A673 (cell line): ENCODE measurements at regions of chr2 and their contacts with region 1.

Region 1: DNA sequence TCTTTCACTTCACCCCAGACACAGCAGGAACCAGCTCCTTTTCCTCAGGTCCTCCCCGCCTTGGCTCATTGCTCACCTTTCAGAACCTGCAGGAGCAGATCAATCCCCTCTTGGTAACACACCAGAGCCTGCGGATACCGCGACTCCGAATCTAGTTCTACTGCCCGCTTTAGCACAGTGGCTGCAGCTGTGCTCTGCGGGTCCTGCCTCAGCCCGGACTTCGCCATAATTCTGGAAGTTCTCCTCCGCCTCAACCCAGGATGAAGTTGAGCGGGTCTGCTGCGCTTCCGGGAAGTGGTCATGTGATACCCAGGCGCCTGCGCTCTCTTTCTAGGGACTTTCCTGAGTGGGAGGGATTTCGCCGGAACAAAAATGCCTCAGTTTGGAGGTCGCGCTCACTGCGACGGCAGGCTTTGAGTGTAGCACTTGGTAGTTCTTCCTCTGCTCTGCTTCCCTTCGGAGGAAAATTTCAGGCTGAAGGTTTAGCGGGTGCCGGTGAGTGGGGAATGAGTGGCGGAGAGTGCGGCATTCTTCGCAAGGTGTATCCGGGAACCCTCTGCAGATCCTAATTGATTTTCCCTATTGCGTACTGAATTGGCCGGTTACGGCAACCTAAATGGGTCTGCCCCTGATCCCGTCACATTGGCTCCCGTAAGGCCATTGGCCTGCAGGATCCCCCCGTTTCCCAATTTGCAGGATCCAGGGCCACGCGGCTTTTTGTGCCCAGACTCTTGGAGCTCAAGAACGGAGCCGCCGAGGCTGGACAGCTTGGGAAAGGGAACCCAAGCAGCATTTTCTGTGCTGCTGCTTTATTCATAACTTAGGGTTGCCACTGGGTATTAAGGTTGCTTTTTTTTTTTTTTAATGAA is at the starts of genes MITD1 and MRPL30:
- DNase-seq: peak; percentile 97
- H3K4me3 ChIP-seq: peak within 1 kb of the TSS; percentile 81
- H3K27ac ChIP-seq: peak within 1 kb of the TSS; percentile 68
- H3K4me1 ChIP-seq: peaks cover 13% of the 10 kb centered on the region
- H3K27me3 ChIP-seq: no peaks in the 10 kb centered on the region
- CTCF ChIP-seq: no peak
- total RNA-seq, gene MITD1: 22.3 and 25.3 TPM in 2 replicates
- total RNA-seq, gene MRPL30: 55.4 and 59.9 TPM in 2 replicates

Region 2: GRCh38 chr2:99154643-99155536 is 26.1 kb before region 1 on chr2 and contains the starts of genes LIPT1 and TSGA10:
- CTCF ChIA-PET with region 1: no interaction called
- POLR2A ChIA-PET with region 1: no interaction called
- intact Hi-C with region 1: loop called (anchors 2 kb)
- DNase-seq: peak; percentile 95
- H3K4me3 ChIP-seq: peak within 1 kb of the TSS; percentile 60
- H3K27ac ChIP-seq: peak within 1 kb of the TSS; percentile 62
- H3K4me1 ChIP-seq: no peaks in the 10 kb centered on the region
- H3K27me3 ChIP-seq: no peaks in the 10 kb centered on the region
- CTCF ChIP-seq: 0 out of 2 replicates have a peak, but pooled peaks have one; percentile 19
- total RNA-seq, gene LIPT1: 6.3 and 7.4 TPM in 2 replicates
- total RNA-seq, gene TSGA10: 2.5 and 2.6 TPM in 2 replicates

Region 3: DNA sequence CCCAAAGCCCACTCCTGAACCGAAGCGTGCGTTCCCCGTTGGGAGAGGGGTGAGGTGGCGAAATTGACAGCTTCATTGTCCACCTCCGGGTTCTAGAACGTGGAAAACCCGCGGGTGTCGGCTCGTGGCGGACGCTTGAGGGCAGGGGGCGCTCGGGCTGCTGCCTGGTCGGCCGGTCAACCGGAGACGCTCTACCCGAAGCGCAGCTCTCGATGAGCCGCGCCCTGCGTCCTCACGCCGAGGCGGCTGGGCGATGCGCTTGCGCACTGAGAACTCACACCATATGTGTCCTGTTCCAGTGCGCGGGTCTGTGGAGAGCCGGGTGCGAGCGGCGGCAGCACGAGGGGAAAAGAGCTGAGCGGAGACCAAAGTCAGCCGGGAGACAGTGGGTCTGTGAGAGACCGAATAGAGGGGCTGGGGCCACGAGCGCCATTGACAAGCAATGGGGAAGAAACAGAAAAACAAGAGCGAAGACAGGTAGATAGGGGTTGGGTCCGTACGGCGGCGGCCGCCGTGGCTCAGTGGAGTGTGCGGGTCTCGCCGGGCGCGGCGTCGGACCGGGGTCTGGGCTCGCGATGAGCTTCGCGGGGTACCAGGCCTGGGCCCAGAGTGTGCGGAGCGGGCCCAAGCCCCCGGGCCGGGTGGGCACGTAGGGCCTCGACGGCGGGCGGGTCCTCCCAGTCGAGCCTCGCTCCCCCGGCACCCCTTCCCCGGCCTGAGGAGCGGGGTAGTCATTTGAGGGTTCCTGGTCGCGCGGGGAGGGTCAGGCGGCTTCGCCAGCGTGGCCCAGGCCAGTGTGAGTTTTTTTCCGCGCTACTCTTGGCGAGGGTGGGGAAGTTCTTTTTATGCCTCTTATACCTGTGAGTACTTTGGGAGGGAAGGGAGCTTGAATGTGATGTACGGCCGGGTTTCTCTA is 156.4 kb after region 1 on chr2 and contains the start of gene EIF5B:
- CTCF ChIA-PET with region 1: no interaction called
- POLR2A ChIA-PET with region 1: no interaction called
- intact Hi-C with region 1: loop called (anchors 1 kb)
- DNase-seq: peak; percentile 98
- H3K4me3 ChIP-seq: peak within 1 kb of the TSS; percentile 71
- H3K27ac ChIP-seq: peak within 1 kb of the TSS; percentile 86
- H3K4me1 ChIP-seq: no peaks in the 10 kb centered on the region
- H3K27me3 ChIP-seq: no peaks in the 10 kb centered on the region
- CTCF ChIP-seq: peak; percentile 78
- total RNA-seq, gene EIF5B: 73.5 and 78.7 TPM in 2 replicates